PC-9 (cell line): ENCODE measurements at regions of chr3 and their contacts with region 1.

Region 1: DNA sequence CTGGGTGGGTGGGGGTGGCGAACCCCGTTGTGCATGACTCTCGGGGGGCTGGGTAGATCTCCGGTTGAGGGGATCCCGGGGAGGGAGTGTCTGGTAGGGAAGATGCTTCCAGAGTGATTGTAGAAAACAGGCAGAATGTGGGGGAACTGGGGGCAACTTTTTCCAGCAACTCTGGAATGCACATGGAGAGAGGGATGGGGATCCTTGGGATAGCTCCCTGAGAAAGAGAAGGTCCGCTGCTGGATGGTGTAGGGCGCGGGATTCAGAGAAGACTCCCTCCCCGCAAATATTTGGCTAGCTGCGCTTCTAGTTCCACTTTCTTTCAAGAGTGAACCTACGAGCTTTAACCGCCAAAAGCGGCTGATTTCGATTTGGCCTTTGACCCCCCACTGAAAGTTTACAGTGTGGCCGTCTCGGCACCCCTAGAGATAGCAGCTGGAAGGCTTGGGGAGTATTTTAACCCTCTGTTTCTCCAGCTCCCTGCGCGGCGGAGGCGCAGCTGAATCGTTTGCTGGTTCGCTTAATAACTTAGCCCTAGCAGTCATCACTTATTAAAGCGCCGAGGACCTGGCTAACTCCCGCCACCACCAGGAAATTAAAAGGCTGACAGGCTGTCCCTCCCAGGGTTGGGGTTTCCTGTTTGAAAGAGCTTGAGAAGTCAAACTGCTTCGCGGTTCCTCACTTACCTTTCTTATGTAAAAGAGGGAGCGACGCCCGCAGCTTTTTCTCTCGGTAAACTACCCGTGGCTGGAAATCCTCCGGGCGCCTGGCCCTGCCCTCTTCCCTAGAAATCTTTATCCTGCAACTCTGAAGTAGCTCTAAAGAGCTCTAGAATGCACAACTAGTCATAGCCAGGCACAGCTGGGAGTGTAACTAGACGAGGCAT is 1.2 kb downstream of the PHLDB2 start:
- DNase-seq: peak; percentile 89 to 97
- H3K4me3 ChIP-seq: peak overlapping the region; percentile 65
- H3K27ac ChIP-seq: peak overlapping the region; percentile 88
- H3K4me1 ChIP-seq: peaks cover 54% of the 10 kb centered on the region
- H3K27me3 ChIP-seq: no peaks in the 10 kb centered on the region
- CTCF ChIP-seq: peak; percentile 68

Region 2: GRCh38 chr3:111585214-111585613 is 275.0 kb before region 1 on chr3:
- CTCF ChIA-PET with region 1: interaction called, 5 read pairs
- POLR2A ChIA-PET with region 1: no interaction called
- intact Hi-C with region 1: loop called (anchors 2 kb)
- DNase-seq: peak; percentile 36 to 93
- H3K4me3 ChIP-seq: no peak overlapping the region
- H3K27ac ChIP-seq: peak overlapping the region; percentile 52
- H3K4me1 ChIP-seq: peaks cover 38% of the 10 kb centered on the region
- H3K27me3 ChIP-seq: no peaks in the 10 kb centered on the region
- CTCF ChIP-seq: no peak

Region 3: GRCh38 chr3:111737706-111738086 is 122.5 kb before region 1 on chr3:
- CTCF ChIA-PET with region 1: interaction called, 7 read pairs
- POLR2A ChIA-PET with region 1: interaction called, 62 read pairs
- intact Hi-C with region 1: loop called (anchors 1 kb)
- DNase-seq: peak; percentile 51 to 77
- H3K4me3 ChIP-seq: no peak overlapping the region
- H3K27ac ChIP-seq: peak overlapping the region; percentile 91
- H3K4me1 ChIP-seq: peaks cover 73% of the 10 kb centered on the region
- H3K27me3 ChIP-seq: no peaks in the 10 kb centered on the region
- CTCF ChIP-seq: no peak

Region 4: GRCh38 chr3:111837112-111837511 is 23.1 kb before region 1 on chr3:
- CTCF ChIA-PET with region 1: no interaction called
- POLR2A ChIA-PET with region 1: no interaction called
- intact Hi-C with region 1: no loop called
- DNase-seq: no peak
- H3K4me3 ChIP-seq: no peak overlapping the region
- H3K27ac ChIP-seq: no peak overlapping the region
- H3K4me1 ChIP-seq: no peaks in the 10 kb centered on the region
- H3K27me3 ChIP-seq: no peaks in the 10 kb centered on the region
- CTCF ChIP-seq: no peak

Region 5: DNA sequence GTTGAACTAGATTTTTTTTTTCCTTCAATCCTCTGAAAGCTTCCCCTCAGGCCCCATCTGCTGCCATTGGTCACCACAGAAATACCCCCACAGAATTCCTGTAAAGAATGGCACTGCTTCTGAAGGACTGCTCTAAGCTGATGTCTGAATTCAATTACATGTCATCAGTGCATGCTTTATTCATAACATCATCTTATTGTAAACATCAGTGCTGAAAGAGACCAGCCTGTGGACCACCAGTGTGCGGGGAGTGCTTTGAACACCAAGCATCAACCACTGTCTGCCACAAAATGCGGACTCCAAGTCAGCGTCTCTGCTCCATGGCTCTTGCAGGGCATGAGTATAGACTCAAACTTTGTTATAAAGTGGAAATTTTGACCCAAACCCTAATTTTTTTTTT is 10.4 kb after region 1 on chr3:
- CTCF ChIA-PET with region 1: interaction called, 6 read pairs
- POLR2A ChIA-PET with region 1: interaction called, 10 read pairs
- intact Hi-C with region 1: no loop called
- DNase-seq: no peak
- H3K4me3 ChIP-seq: no peak overlapping the region
- H3K27ac ChIP-seq: peak overlapping the region; percentile 2; the same call in 1 of the 2 replicates
- H3K4me1 ChIP-seq: peaks cover 39% of the 10 kb centered on the region
- H3K27me3 ChIP-seq: no peaks in the 10 kb centered on the region
- CTCF ChIP-seq: no peak

Region 6: DNA sequence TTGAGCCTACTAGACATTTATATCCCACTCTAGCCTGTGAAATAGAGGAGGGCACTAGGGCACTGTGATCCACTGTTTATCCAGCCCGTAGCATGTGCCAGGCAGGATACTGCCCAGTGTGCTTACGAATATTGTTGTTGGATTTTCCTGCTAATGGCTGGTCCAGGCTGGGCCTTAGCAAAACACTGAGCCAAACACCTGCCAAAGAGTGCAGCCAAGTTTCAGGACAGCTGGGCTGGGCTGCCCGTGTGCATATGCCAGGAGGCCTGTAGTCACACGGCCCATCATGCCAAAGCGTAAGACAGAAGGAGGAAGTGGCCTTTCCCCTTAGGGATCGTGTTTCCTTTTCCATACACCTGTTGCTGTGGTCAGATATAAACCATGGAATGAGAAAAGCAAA is 64.1 kb after region 1 on chr3:
- CTCF ChIA-PET with region 1: no interaction called
- POLR2A ChIA-PET with region 1: interaction called, 8 read pairs
- intact Hi-C with region 1: loop called (anchors 1 kb)
- DNase-seq: peak in 1 of 2 experiments; percentile 60
- H3K4me3 ChIP-seq: 0 out of 2 replicates have a peak overlapping the region, but pooled peaks have one; percentile 1
- H3K27ac ChIP-seq: peak overlapping the region; percentile 96
- H3K4me1 ChIP-seq: peaks cover 52% of the 10 kb centered on the region
- H3K27me3 ChIP-seq: no peaks in the 10 kb centered on the region
- CTCF ChIP-seq: no peak

Region 7: GRCh38 chr3:112074721-112075497 is 214.7 kb after region 1 on chr3:
- CTCF ChIA-PET with region 1: no interaction called
- POLR2A ChIA-PET with region 1: no interaction called
- intact Hi-C with region 1: loop called (anchors 10 kb)
- DNase-seq: peak; percentile 94 to 100
- H3K4me3 ChIP-seq: peak overlapping the region; percentile 35; the same call in 1 of the 2 replicates
- H3K27ac ChIP-seq: peak overlapping the region; percentile 78
- H3K4me1 ChIP-seq: peaks cover 28% of the 10 kb centered on the region
- H3K27me3 ChIP-seq: no peaks in the 10 kb centered on the region
- CTCF ChIP-seq: no peak

Region 8: DNA sequence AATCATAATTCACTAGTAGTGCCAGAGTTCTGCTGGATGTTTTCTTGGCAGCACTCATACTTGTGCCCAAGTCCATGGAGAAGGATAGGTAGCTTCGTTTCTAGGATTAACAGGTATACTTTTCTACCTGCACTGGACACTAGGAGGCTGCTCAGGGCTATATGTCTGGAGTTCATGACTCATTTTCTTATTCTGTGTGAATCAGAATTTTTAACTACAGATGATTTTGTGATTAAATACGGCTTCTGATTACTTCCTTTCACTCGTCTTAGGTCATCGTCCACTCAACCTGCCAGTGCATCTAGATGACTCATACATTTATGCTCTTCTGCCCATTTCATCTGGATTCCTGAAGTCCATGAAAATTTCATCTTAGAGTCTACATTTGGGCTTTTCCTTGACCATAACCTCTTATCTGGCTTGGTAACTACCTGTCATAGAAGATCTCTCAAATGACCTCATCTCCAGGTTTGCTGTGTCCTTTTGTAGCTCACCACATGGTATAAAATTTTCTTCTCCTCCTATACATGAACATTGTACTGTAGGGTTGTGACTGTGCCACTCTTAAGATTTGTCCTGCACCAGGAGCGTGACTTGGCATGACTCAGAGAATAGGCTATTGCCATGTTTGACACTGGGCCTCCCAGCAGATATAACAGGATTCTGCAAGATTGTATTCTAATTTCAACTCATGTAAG is 339.6 kb after region 1 on chr3:
- CTCF ChIA-PET with region 1: no interaction called
- POLR2A ChIA-PET with region 1: no interaction called
- intact Hi-C with region 1: no loop called
- DNase-seq: peak; percentile 23 to 79
- H3K4me3 ChIP-seq: no peak overlapping the region
- H3K27ac ChIP-seq: no peak overlapping the region
- H3K4me1 ChIP-seq: no peaks in the 10 kb centered on the region
- H3K27me3 ChIP-seq: no peaks in the 10 kb centered on the region
- CTCF ChIP-seq: peak; percentile 39; the same call in 1 of the 2 replicates